Head of caudate nucleus (tissue), 42 donors: ENCODE measurements at regions of chr5 and their contacts with region 1.

Region 1: GRCh38 chr5:141960449-141961202 is 2.6 kb upstream of the PCDH12 start:
- DNase-seq: peak; percentile 74 to 97 (median 91)

Region 2: GRCh38 chr5:141691867-141692532 is 268.6 kb before region 1 on chr5:
- intact Hi-C with region 1: loop called (anchors 2 kb)
- DNase-seq: peak; percentile 76 to 96 (median 90)

Region 3: GRCh38 chr5:141923448-141924352 is 36.9 kb before region 1 on chr5 and contains the start of gene DELE1:
- intact Hi-C with region 1: loop called (anchors 5 kb)
- DNase-seq: peak; percentile 87 to 98 (median 93)